Adrenal gland (tissue), 19 donors: ENCODE measurements at regions of chr4 and their contacts with region 1.

Region 1: DNA sequence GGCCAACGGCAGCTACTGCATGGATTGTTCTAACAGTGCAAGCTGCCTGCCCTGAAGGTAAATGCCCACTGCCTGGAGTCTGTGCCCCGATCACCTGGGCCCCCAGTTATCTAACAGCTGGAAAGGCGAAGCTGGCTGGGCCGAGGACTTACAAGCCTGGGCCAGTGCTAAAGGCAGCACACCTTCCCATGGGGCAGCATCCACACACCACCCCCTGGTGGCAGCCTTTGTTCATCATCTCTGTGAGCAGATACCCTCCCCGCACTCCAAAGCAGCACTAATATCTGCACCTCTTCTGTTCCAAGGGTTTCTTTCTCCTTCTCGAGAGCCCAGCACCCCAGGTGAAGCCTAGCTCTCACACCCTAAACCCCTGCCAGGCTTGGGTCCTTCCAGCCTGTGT is 7.6 kb downstream of the SLC2A9 start:
- DNase-seq: peak in 6 of 7 donors; percentile 49 to 76 (median 73)
- H3K4me3 ChIP-seq: no peak overlapping the region
- H3K27ac ChIP-seq: no peak overlapping the region
- H3K4me1 ChIP-seq: peaks cover 0 to 5% of the 10 kb centered on the region in 2 donors
- H3K27me3 ChIP-seq: no peaks in the 10 kb centered on the region
- CTCF ChIP-seq: peak; percentile 29 to 59 (median 46)
- POLR2A ChIP-seq: no peak

Region 2: GRCh38 chr4:9970392-9971013 is 43.2 kb before region 1 on chr4:
- intact Hi-C with region 1: loop called in 1 of 2 experiments (anchors 5 kb)
- DNase-seq: no peak
- H3K4me3 ChIP-seq: no peak overlapping the region
- H3K27ac ChIP-seq: no peak overlapping the region
- H3K4me1 ChIP-seq: peaks cover 3 to 5% of the 10 kb centered on the region in 2 donors
- H3K27me3 ChIP-seq: no peaks in the 10 kb centered on the region
- CTCF ChIP-seq: no peak
- POLR2A ChIP-seq: no peak

Region 3: GRCh38 chr4:10204401-10205058 is 190.8 kb after region 1 on chr4:
- intact Hi-C with region 1: no loop called
- DNase-seq: no peak
- H3K4me3 ChIP-seq: no peak overlapping the region
- H3K27ac ChIP-seq: no peak overlapping the region
- H3K4me1 ChIP-seq: no peaks in the 10 kb centered on the region
- H3K27me3 ChIP-seq: no peaks in the 10 kb centered on the region
- CTCF ChIP-seq: no peak
- POLR2A ChIP-seq: no peak